Right ventricle myocardium superior (tissue), 1 donor: ENCODE measurements at regions of chr10 and their contacts with region 1.

Region 1: GRCh38 chr10:35563261-35563891 is 41.8 kb upstream of the GJD4 start:
- DNase-seq: peak; percentile 68
- ATAC-seq: no peak

Region 2: DNA sequence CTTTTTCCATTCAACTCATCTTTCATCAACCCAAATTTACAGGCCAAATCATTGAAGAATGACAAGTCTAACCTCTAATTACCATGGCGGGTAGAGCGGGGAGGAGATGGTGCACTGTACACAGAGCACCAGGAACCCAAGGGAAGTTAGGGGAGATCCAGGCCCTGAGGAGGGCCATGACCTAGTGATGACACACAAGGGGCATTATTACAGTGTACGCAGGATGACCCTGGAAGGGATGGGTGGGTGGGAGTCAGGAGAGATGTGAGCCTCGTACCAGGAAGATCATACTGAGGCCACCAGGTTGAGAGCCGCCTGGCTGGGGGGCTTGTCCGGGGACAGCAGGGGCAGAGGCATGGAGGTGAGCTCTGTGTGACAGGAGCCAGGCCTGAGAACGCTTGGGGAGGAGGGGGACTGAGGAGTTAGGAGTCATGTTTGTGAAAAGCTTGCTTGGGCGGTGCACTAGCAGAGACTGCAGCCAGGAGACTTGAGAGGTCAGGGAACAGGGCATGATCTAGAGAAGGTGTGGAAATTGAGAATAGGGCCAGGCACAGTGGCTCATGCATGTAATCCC is 316.5 kb before region 1 on chr10:
- intact Hi-C with region 1: loop called (anchors 10 kb)
- DNase-seq: no peak
- ATAC-seq: no peak

Region 3: DNA sequence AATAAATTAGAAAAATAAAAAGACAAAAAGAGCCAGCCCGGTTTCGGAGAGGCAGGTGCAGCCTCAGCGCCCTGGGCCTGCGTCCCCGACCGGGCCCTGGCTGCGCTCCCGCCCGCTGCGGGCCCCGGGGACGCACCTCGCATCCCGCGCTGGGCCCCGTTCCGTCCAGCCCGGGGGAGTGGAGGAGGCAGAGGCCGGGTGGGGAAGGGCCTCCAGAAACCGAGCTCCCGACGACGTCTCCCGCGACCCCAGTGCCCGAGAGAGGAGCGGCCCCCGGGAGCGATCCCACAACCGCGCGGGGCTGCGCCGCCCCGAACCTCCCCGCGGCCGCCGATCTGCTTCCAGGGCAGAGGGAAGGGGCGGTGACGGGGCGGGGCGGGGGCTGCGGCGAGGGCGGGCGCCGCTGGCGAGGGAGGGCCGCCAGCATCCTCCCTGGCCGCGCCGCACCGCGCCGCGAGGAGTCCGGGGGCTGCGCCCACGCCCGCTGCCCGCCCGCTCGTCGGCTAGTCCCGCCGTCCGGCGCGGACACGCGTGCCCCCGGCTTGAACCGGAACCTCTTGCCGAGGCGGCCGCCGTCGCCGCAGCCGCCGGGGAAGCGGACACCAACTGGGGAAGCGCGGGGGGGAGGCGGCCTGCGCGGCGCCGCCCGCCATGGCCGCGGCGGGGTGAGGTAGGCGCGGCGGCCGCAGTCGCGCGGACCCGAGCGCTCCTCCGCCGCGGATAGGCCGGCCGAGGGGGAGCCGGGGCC is 227.1 kb before region 1 on chr10 and contains the start of gene CCNY:
- intact Hi-C with region 1: loop called (anchors 5 kb)
- DNase-seq: peak; percentile 89
- ATAC-seq: peak; percentile 94
- total RNA-seq, gene CCNY: 92.7 TPM

Region 4: DNA sequence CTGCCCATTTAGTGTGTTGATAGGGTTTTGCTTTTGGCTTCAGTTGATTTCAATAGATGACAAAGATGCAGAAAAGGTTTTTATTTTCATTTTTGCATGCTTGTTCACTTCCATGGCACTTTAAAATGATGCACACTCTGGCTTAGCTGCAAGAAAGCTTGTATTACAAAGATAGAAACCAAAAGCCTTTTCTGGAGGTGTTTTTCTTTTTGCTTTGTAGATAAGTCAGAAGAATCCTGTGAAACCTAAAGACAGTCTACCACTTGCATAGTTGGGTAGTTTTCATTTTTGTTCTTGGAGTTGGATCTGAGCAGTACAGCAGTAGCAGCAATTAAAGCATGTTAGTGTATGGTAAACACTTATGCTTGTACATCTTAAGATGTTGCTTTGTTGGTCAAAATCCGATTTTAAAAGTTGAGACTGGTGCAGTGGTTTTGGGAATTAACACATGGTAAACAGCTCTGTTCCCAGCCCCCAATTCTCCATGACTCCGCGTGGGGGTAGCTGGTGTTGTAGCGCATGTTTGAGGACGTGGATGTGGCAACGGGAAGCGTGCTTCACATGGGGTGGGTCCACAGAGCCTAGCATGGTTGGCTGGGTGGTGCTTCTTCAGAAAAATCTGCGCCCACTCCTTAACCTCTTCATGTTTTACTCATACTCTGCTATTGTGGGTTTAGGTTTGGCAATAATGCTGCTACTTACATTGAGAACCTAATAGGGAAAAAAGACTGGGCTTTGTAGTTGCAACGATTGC is 207.2 kb before region 1 on chr10:
- intact Hi-C with region 1: no loop called
- DNase-seq: no peak
- ATAC-seq: no peak